GM12878 (cell line): ENCODE measurements at regions of chr10 and their contacts with region 1.

Region 1: GRCh38 chr10:61903221-61903927 is 1.9 kb downstream of the ARID5B start:
- DNase-seq: peak; percentile 53
- ATAC-seq: peak; percentile 65
- H3K4me3 ChIP-seq: peak overlapping the region; percentile 85
- H3K27ac ChIP-seq: peak overlapping the region; percentile 96
- H3K4me1 ChIP-seq: peaks cover 20% of the 10 kb centered on the region
- H3K27me3 ChIP-seq: no peaks in the 10 kb centered on the region
- CTCF ChIP-seq: peak; percentile 0 to 17 (median 12); a peak in 3 of 6 replicates
- EP300 ChIP-seq: peak; percentile 48 to 69; a peak in 2 of 4 replicates
- POLR2A ChIP-seq: peak; percentile 76
- RAD21 ChIP-seq: no peak

Region 2: DNA sequence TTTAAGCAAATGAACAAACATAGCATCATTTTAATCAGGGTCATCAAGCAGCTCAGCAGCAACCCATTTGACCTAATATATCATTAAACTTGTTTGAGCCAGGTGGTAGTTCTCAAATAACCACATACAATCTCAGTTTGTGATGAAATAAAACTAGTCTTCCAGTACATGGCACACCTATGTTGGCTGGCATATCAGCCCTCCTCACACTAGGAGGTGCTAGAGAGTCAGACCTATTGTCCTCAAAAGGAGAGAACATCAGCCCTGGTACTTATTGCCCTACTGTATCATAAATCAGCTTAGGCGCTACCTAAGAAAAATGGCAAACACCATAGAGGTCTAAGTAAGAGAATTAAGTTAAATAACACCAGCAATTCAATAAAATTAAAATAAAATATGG is 158.9 kb before region 1 on chr10:
- CTCF ChIA-PET with region 1: no interaction called
- POLR2A ChIA-PET with region 1: no interaction called
- RAD21 ChIA-PET with region 1: no interaction called
- SMC1A ChIA-PET with region 1: no interaction called
- in situ Hi-C with region 1: no loop called
- intact Hi-C with region 1: no loop called
- DNase-seq: no peak
- ATAC-seq: 0 out of 3 replicates have a peak, but pooled peaks have one; percentile 30
- H3K4me3 ChIP-seq: no peak overlapping the region
- H3K27ac ChIP-seq: no peak overlapping the region
- H3K4me1 ChIP-seq: no peaks in the 10 kb centered on the region
- H3K27me3 ChIP-seq: no peaks in the 10 kb centered on the region
- CTCF ChIP-seq: peak in 2 of 3 experiments; percentile 11 to 37; a peak in 2 of 6 replicates
- EP300 ChIP-seq: no peak
- POLR2A ChIP-seq: no peak
- RAD21 ChIP-seq: no peak

Region 3: GRCh38 chr10:61943674-61944410 is 40.5 kb after region 1 on chr10:
- CTCF ChIA-PET with region 1: interaction called, 9 read pairs
- POLR2A ChIA-PET with region 1: interaction called, 6 read pairs
- RAD21 ChIA-PET with region 1: interaction called, 68 read pairs
- SMC1A ChIA-PET with region 1: interaction called, 31 read pairs
- in situ Hi-C with region 1: loop called (anchors 5 kb)
- intact Hi-C with region 1: loop called (anchors 1 kb)
- DNase-seq: no peak
- ATAC-seq: peak; percentile 73
- H3K4me3 ChIP-seq: 0 out of 2 replicates have a peak overlapping the region, but pooled peaks have one; percentile 53
- H3K27ac ChIP-seq: peak overlapping the region; percentile 97
- H3K4me1 ChIP-seq: peaks cover 52% of the 10 kb centered on the region
- H3K27me3 ChIP-seq: no peaks in the 10 kb centered on the region
- CTCF ChIP-seq: peak in 1 of 3 experiments; percentile 11; a peak in 1 of 6 replicates
- EP300 ChIP-seq: peak in 1 of 2 experiments; percentile 63; a peak in 1 of 4 replicates
- POLR2A ChIP-seq: no peak
- RAD21 ChIP-seq: peak; percentile 42; the same call in 1 of the 2 replicates

Region 4: DNA sequence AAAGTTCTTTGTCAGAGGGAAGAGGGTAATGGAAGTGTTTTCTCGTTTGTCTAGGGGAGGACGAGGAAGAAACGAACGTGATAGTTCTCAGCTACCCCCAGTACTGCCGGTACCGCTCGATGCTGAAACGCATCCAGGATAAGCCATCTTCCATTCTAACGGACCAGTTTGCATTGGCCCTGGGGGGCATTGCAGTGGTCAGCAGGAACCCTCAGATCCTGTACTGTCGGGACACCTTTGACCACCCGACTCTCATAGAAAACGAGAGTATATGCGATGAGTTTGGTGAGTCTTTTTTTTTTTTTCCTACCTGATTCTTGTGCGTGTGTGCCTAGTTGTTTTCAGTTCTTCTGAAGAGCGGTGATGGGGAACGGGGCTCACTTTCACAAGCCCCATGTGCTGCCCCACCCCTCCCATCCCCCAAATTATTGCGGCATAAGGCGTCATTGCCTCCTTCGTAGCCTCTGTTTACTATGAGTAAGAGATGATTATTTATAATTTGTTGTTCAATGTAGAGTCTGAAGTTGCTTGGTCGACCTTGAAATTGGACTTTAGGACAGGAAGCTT is 96.7 kb after region 1 on chr10:
- CTCF ChIA-PET with region 1: no interaction called
- POLR2A ChIA-PET with region 1: interaction called, 4 read pairs
- RAD21 ChIA-PET with region 1: interaction called, 4 read pairs
- SMC1A ChIA-PET with region 1: interaction called, 5 read pairs
- in situ Hi-C with region 1: no loop called
- intact Hi-C with region 1: loop called (anchors 1 kb)
- DNase-seq: peak; percentile 90
- ATAC-seq: peak; percentile 86
- H3K4me3 ChIP-seq: peak overlapping the region; percentile 49
- H3K27ac ChIP-seq: peak overlapping the region; percentile 96
- H3K4me1 ChIP-seq: peaks cover 45% of the 10 kb centered on the region
- H3K27me3 ChIP-seq: no peaks in the 10 kb centered on the region
- CTCF ChIP-seq: no peak
- EP300 ChIP-seq: peak; percentile 100
- POLR2A ChIP-seq: peak; percentile 69
- RAD21 ChIP-seq: peak; percentile 15; the same call in 1 of the 2 replicates

Region 5: DNA sequence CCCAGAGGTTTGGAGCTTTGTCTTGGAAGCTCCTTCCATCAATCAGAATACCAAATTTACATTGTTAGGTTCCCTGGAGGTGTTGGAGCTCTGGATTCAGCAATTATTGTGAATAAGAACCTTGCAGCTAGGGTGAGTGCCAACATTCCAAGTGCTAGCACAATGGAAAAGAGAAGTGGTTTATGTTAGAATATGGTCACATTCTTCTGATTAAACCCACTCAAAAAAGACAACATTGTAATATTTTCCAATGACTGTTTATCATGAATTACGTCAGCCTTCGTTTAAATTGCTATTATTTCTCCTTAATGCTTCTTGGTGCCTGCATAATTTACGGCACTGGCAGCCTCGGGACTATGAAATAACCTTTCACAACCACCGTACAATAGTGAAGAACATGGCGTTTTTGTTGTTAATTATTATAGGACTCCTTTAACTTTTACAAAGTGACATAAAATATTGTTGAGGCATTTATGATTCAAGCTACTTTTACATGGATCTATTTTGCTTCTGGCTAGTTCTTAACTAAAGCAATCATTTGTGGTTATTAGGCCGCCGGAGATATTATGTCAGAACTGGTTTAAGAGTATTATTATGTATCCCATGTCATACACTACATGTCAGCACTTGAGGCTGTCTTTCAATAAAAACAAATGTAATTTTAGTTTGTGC is 115.8 kb after region 1 on chr10:
- CTCF ChIA-PET with region 1: interaction called, 3 read pairs
- POLR2A ChIA-PET with region 1: interaction called, 3 read pairs
- RAD21 ChIA-PET with region 1: interaction called, 4 read pairs
- SMC1A ChIA-PET with region 1: interaction called, 6 read pairs
- in situ Hi-C with region 1: no loop called
- intact Hi-C with region 1: loop called (anchors 1 kb)
- DNase-seq: no peak
- ATAC-seq: no peak
- H3K4me3 ChIP-seq: peak overlapping the region; percentile 18; the same call in 1 of the 2 replicates
- H3K27ac ChIP-seq: peak overlapping the region; percentile 85
- H3K4me1 ChIP-seq: peaks cover 65% of the 10 kb centered on the region
- H3K27me3 ChIP-seq: no peaks in the 10 kb centered on the region
- CTCF ChIP-seq: no peak
- EP300 ChIP-seq: no peak
- POLR2A ChIP-seq: no peak
- RAD21 ChIP-seq: no peak